Mammary epithelial cell (primary cell): ENCODE measurements at regions of chr22 and their contacts with region 1.

Region 1: GRCh38 chr22:39973656-39974055 is 13.5 kb downstream of the TMA7B start:
- DNase-seq: no peak
- H3K4me3 ChIP-seq: no peak overlapping the region
- H3K27ac ChIP-seq: no peak overlapping the region
- H3K4me1 ChIP-seq: no peaks in the 10 kb centered on the region
- H3K27me3 ChIP-seq: no peaks in the 10 kb centered on the region
- CTCF ChIP-seq: no peak

Region 2: DNA sequence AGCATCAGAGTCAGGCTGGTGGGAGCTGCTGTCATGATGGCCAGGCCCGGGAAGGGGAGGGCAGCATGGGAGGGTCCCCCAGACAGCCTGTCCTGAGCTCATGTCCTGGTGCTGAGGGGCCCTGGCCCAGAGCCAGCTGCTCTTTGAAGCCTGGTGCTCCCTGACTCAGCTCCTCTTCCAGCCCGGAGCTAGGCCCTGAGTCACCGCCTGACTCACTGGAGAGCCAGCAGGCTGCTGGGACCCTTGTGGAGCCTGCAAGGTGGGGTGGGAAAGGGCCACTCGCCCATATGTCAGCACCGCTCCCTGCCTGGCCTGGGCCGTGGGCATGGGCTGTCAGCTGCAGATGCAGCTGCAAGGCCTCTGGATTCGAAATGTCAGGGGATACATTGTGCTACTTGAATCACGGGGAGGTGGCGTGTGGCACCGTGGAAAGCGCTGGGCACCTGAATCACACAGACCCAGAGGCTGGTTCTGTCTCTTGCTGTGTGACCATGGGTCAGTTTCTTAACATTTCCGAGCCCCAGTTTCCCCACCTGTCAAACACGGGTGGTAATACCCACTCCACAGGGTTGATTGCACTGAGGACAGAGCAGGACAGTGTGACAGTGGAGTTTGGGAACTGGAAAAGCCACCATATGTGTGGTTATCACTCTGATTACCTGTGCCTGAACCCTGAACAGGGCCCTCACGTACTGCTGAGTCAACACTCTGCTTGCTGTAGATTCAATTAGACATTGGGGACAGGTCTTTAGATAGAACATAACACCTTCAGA is 398.7 kb before region 1 on chr22:
- CTCF ChIA-PET with region 1: no interaction called
- dilution Hi-C with region 1: no loop called
- in situ Hi-C with region 1: no loop called
- intact Hi-C with region 1: no loop called
- DNase-seq: peak; percentile 80
- H3K4me3 ChIP-seq: no peak overlapping the region
- H3K27ac ChIP-seq: no peak overlapping the region
- H3K4me1 ChIP-seq: peaks cover 11% of the 10 kb centered on the region
- H3K27me3 ChIP-seq: no peaks in the 10 kb centered on the region
- CTCF ChIP-seq: no peak

Region 3: DNA sequence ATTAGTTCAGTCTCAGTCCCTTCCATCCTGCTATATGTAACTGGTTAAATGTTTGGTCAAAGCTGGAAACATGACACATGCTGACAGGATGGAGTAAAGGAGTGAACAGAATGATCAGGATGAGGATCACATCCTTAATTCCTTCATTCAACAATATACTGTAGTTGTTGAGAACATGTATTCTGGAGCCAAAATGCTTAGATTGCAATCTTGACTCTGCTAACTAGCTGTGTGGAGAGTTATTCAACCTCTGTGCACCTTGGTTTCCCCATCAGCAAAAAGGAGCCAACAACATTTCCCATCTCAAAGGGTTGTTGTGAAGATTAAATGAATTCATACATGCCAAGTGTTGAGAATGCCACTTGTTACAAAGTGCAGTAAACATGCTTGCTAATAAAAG is 92.9 kb before region 1 on chr22:
- CTCF ChIA-PET with region 1: no interaction called
- dilution Hi-C with region 1: loop called (anchors 5 kb)
- in situ Hi-C with region 1: no loop called
- intact Hi-C with region 1: no loop called
- DNase-seq: no peak
- H3K4me3 ChIP-seq: no peak overlapping the region
- H3K27ac ChIP-seq: no peak overlapping the region
- H3K4me1 ChIP-seq: no peaks in the 10 kb centered on the region
- H3K27me3 ChIP-seq: peaks cover 4% of the 10 kb centered on the region
- CTCF ChIP-seq: no peak